ENCODE measurements at regions of chr11 and their contacts with region 1.

Region 1: DNA sequence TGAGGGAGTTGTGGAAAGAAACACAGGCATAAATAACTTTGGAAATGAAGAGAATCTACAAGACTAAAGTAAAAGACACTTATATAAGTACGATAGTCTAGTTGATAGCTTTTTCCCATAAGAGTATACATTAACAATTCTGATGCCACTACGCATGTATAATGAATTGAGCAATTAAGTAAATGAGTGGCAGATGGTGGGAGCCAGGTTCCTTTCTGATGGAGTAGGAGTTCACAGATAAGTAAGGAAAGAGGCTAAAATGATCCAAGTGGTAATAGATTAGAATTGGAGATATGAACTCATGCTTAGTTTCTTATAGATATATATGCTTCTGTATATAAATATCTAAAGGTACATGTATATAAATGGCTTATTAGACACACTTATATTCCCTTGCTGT is 368.3 kb downstream of the FAM181B start:
- DNase-seq: no peak
- H3K4me3 ChIP-seq: no peak overlapping the region
- H3K27ac ChIP-seq: no peak overlapping the region
- H3K4me1 ChIP-seq: no peaks in the 10 kb centered on the region
- H3K27me3 ChIP-seq: no peaks in the 10 kb centered on the region
- CTCF ChIP-seq: no peak

Region 2: DNA sequence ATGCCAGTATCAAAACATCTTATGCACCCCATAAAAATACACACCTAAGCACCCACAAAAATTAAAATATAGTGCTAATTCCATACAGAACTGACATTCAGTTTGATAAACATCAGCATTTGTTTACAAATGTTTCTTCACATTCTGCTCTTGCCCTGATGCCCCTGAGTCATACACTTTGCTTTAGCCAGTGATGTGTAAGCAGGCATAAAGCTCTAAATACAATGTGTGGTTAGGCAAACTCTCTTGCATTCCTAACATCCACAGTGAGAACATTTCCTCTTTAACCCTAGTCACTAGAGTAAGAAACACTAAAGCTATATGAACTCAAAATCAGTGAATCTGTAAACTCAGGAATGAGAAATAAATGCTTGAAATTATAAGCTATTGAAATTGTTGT is 692.4 kb before region 1 on chr11:
- CTCF ChIA-PET with region 1: no interaction called
- POLR2A ChIA-PET with region 1: no interaction called
- intact Hi-C with region 1: no loop called
- DNase-seq: no peak
- H3K4me3 ChIP-seq: no peak overlapping the region
- H3K27ac ChIP-seq: no peak overlapping the region
- H3K4me1 ChIP-seq: no peaks in the 10 kb centered on the region
- H3K27me3 ChIP-seq: no peaks in the 10 kb centered on the region
- CTCF ChIP-seq: no peak

Region 3: GRCh38 chr11:82384308-82384707 is 19.0 kb after region 1 on chr11:
- CTCF ChIA-PET with region 1: no interaction called
- POLR2A ChIA-PET with region 1: interaction called, 20 read pairs
- intact Hi-C with region 1: no loop called
- DNase-seq: no peak
- H3K4me3 ChIP-seq: no peak overlapping the region
- H3K27ac ChIP-seq: no peak overlapping the region
- H3K4me1 ChIP-seq: no peaks in the 10 kb centered on the region
- H3K27me3 ChIP-seq: no peaks in the 10 kb centered on the region
- CTCF ChIP-seq: no peak